ENCODE measurements at regions of chr1 and their contacts with region 1.

Region 1: GRCh38 chr1:167756730-167757405 is 35.1 kb downstream of the MPZL1 start:
- DNase-seq: no peak
- ATAC-seq: no peak
- H3K4me3 ChIP-seq: no peak overlapping the region
- H3K4me3 Mint-ChIP-seq: no peak overlapping the region
- H3K27ac ChIP-seq: no peak overlapping the region
- H3K27ac Mint-ChIP-seq: no peak overlapping the region
- H3K4me1 ChIP-seq: peaks cover 6% of the 10 kb centered on the region
- H3K4me1 Mint-ChIP-seq: peaks cover 18% of the 10 kb centered on the region
- H3K27me3 ChIP-seq: no peaks in the 10 kb centered on the region
- H3K27me3 Mint-ChIP-seq: no peaks in the 10 kb centered on the region
- CTCF ChIP-seq: no peak

Region 2: GRCh38 chr1:167829868-167830267 is 73.0 kb after region 1 on chr1:
- CTCF ChIA-PET with region 1: no interaction called
- POLR2A ChIA-PET with region 1: no interaction called
- intact Hi-C with region 1: no loop called
- DNase-seq: no peak
- ATAC-seq: no peak
- H3K4me3 ChIP-seq: no peak overlapping the region
- H3K4me3 Mint-ChIP-seq: no peak overlapping the region
- H3K27ac ChIP-seq: no peak overlapping the region
- H3K27ac Mint-ChIP-seq: no peak overlapping the region
- H3K4me1 ChIP-seq: no peaks in the 10 kb centered on the region
- H3K4me1 Mint-ChIP-seq: no peaks in the 10 kb centered on the region
- H3K27me3 ChIP-seq: no peaks in the 10 kb centered on the region
- H3K27me3 Mint-ChIP-seq: no peaks in the 10 kb centered on the region
- CTCF ChIP-seq: no peak

Region 3: GRCh38 chr1:168145184-168146159 is 388.6 kb after region 1 on chr1:
- CTCF ChIA-PET with region 1: no interaction called
- POLR2A ChIA-PET with region 1: no interaction called
- intact Hi-C with region 1: no loop called
- DNase-seq: peak; percentile 72 to 89 (median 81)
- ATAC-seq: peak; percentile 99
- H3K4me3 ChIP-seq: no peak overlapping the region
- H3K4me3 Mint-ChIP-seq: peak overlapping the region; percentile 42
- H3K27ac ChIP-seq: no peak overlapping the region
- H3K27ac Mint-ChIP-seq: no peak overlapping the region
- H3K4me1 ChIP-seq: no peaks in the 10 kb centered on the region
- H3K4me1 Mint-ChIP-seq: peaks cover 12% of the 10 kb centered on the region
- H3K27me3 ChIP-seq: no peaks in the 10 kb centered on the region
- H3K27me3 Mint-ChIP-seq: no peaks in the 10 kb centered on the region
- CTCF ChIP-seq: peak; percentile 91

Region 4: DNA sequence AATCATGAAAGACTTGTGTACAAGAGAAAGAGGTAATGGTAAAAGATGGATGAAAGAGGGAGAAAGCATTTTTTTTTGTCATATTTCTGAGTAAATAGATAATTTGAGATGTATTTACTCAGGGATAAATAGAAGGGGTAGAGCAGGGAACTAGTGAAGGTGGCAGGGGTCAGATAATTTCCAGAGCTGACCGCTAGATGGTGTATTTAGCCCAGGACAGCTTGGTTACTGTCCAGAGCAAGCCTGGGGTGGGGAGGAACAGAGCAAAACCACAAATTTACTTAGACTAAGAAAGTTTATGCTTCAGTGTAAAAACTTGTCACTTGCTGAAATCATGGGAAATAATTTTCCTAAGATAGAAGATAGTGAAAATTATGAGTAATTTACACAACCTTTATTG is 695.5 kb after region 1 on chr1:
- CTCF ChIA-PET with region 1: no interaction called
- POLR2A ChIA-PET with region 1: no interaction called
- intact Hi-C with region 1: loop called in 1 of 2 experiments (anchors 5 kb)
- DNase-seq: no peak
- ATAC-seq: no peak
- H3K4me3 ChIP-seq: no peak overlapping the region
- H3K4me3 Mint-ChIP-seq: no peak overlapping the region
- H3K27ac ChIP-seq: no peak overlapping the region
- H3K27ac Mint-ChIP-seq: no peak overlapping the region
- H3K4me1 ChIP-seq: peaks cover 7% of the 10 kb centered on the region
- H3K4me1 Mint-ChIP-seq: peaks cover 30% of the 10 kb centered on the region
- H3K27me3 ChIP-seq: no peaks in the 10 kb centered on the region
- H3K27me3 Mint-ChIP-seq: no peaks in the 10 kb centered on the region
- CTCF ChIP-seq: no peak

Measured in CD8-positive, alpha-beta T cell (primary cell).